Transverse colon (tissue), 4 donors: ENCODE measurements at regions of chr21 and their contacts with region 1.

Region 1: GRCh38 chr21:32569261-32570230 is 15.8 kb downstream of the TCP10L start:
- DNase-seq: peak; percentile 83
- H3K4me3 ChIP-seq: peak overlapping the region; percentile 44 to 64 (median 45)
- H3K27ac ChIP-seq: peak overlapping the region; percentile 77 to 94 (median 84)
- H3K4me1 ChIP-seq: peaks cover 0 to 17% (median 11%) of the 10 kb centered on the region in 4 donors
- H3K27me3 ChIP-seq: no peaks in the 10 kb centered on the region
- CTCF ChIP-seq: peak; percentile 80 to 86 (median 83)
- EP300 ChIP-seq: no peak
- POLR2A ChIP-seq: peak; percentile 24

Region 2: DNA sequence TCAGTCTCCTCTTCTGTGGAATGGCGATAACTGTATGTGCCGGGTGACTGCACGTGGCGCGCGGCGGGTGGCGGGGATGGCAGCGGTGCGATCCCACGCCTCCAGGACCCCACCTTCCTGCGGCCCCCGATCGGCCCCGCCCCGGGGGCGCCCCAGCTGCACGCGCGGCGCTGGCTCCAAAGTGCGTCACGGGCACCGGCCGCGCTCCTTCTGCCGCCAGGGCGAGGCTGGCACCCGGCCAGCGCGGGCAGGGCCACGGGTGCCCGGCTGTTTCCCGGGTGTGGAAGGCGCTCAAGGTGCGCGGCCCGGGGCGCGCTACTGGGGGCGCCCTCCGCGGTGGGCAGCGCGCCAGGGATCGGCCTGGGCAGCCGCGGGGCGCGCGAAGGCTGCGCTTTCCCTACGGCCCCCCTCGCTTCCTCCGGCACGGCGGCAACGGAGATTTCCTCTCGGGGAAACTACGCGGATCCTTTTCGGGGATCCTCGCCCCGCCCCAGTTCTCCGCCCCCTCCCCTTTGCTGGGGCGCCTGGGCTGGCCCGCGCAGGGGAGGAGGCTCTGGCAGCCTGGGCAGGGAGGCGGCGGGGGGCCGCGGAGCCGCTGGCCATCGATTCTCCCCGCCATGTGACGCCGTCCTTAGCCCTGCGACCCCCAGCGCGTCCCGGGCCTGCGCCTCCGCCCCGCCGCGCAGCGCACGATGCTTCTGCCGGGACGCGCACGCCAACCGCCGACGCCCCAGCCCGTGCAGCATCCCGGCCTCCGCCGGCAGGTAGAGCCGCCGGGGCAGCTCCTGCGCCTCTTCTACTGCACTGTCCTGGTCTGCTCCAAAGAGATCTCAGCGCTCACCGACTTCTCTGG is 157.2 kb before region 1 on chr21 and contains the start of gene EVA1C:
- in situ Hi-C with region 1: loop called in 3 of 4 experiments (anchors 5 to 25 kb)
- intact Hi-C with region 1: loop called (anchors 5 kb)
- DNase-seq: peak; percentile 82
- H3K4me3 ChIP-seq: peak within 1 kb of the TSS; percentile 46 to 75 (median 70)
- H3K27ac ChIP-seq: peak within 1 kb of the TSS; percentile 95 to 98 (median 96)
- H3K4me1 ChIP-seq: peaks cover 4 to 37% (median 25%) of the 10 kb centered on the region in 4 donors
- H3K27me3 ChIP-seq: no peaks in the 10 kb centered on the region
- CTCF ChIP-seq: peak in 3 of 5 experiments; percentile 4 to 19 (median 11)
- EP300 ChIP-seq: peak; percentile 57
- POLR2A ChIP-seq: no peak
- total RNA-seq, gene EVA1C: 8.6 to 44.1 (median 33.8) TPM

Region 3: GRCh38 chr21:32494934-32495703 is 74.4 kb before region 1 on chr21:
- in situ Hi-C with region 1: no loop called
- intact Hi-C with region 1: no loop called
- DNase-seq: no peak
- H3K4me3 ChIP-seq: no peak overlapping the region
- H3K27ac ChIP-seq: peak overlapping the region; percentile 29 to 56 (median 37)
- H3K4me1 ChIP-seq: peaks cover 0 to 36% (median 17%) of the 10 kb centered on the region in 4 donors
- H3K27me3 ChIP-seq: no peaks in the 10 kb centered on the region
- CTCF ChIP-seq: no peak
- EP300 ChIP-seq: no peak
- POLR2A ChIP-seq: no peak